Activated CD8-positive, alpha-beta T cell treated with anti-CD3 and anti-CD28 coated beads for 36 hours (primary cell): ENCODE measurements at regions of chr2 and their contacts with region 1.

Region 1: DNA sequence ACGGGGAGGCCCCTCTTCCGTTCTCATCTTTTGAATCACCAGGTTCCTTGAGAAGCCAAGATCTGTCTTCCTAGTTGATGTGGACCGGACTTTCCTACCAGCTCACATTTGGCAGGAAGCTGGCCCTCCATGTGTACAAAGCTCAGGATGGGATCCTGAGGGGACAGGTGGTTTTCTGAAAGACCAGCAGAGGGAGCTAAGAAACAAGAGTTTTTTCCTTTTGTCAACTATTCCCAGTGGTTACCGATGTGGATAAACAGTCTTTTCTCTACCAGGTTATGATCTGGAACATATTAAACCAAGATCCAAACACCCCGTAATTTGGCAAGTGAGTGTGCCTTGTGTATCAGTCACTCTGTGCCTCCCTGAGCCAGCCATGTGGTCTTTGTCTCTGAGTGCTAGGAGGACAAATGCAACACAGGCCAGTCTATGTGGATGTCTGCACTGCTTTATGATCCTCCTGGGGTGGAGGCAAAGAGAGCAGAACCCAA is 25.1 kb upstream of the ARHGAP25 start:
- DNase-seq: peak; percentile 32
- ATAC-seq: peak; percentile 84
- H3K4me3 Mint-ChIP-seq: no peak overlapping the region
- H3K27ac Mint-ChIP-seq: peak overlapping the region; percentile 63
- H3K4me1 Mint-ChIP-seq: peaks cover 26% of the 10 kb centered on the region
- H3K27me3 Mint-ChIP-seq: peaks cover 2% of the 10 kb centered on the region
- CTCF ChIP-seq: peak; percentile 87

Region 2: DNA sequence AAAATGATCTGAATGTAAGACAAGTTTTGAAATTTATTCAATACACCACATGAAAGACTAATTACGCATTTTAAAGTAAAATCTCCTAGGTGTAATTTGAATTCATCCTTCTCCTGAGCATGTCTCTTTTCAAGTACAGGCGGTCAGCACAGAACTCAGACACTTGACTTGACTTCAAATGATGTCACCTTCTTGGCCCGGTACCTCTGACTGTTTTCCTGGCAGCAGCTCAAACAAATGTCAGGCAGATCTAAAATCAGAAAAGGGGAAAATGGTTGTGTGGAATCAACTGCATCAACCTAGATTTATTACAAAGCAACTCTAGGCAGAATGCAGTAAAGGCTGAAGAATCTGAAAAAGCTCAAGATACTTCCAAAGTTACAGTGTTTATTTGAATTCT is 77.4 kb before region 1 on chr2:
- CTCF ChIA-PET with region 1: no interaction called
- POLR2A ChIA-PET with region 1: no interaction called
- intact Hi-C with region 1: no loop called
- DNase-seq: no peak
- ATAC-seq: no peak
- H3K4me3 Mint-ChIP-seq: no peak overlapping the region
- H3K27ac Mint-ChIP-seq: no peak overlapping the region
- H3K4me1 Mint-ChIP-seq: no peaks in the 10 kb centered on the region
- H3K27me3 Mint-ChIP-seq: peaks cover 6% of the 10 kb centered on the region
- CTCF ChIP-seq: no peak

Region 3: GRCh38 chr2:68653538-68653982 is 55.9 kb before region 1 on chr2:
- CTCF ChIA-PET with region 1: interaction called, 15 read pairs
- POLR2A ChIA-PET with region 1: no interaction called
- intact Hi-C with region 1: no loop called
- DNase-seq: peak; percentile 80
- ATAC-seq: peak; percentile 81
- H3K4me3 Mint-ChIP-seq: peak overlapping the region; percentile 42
- H3K27ac Mint-ChIP-seq: peak overlapping the region; percentile 84
- H3K4me1 Mint-ChIP-seq: peaks cover 47% of the 10 kb centered on the region
- H3K27me3 Mint-ChIP-seq: peaks cover 27% of the 10 kb centered on the region
- CTCF ChIP-seq: no peak

Region 4: GRCh38 chr2:68721482-68722101 is 12.1 kb after region 1 on chr2:
- CTCF ChIA-PET with region 1: interaction called, 57 read pairs
- POLR2A ChIA-PET with region 1: interaction called, 3 read pairs
- intact Hi-C with region 1: no loop called
- DNase-seq: peak; percentile 53
- ATAC-seq: peak; percentile 33
- H3K4me3 Mint-ChIP-seq: peak overlapping the region; percentile 50
- H3K27ac Mint-ChIP-seq: peak overlapping the region; percentile 87
- H3K4me1 Mint-ChIP-seq: peaks cover 77% of the 10 kb centered on the region
- H3K27me3 Mint-ChIP-seq: no peaks in the 10 kb centered on the region
- CTCF ChIP-seq: no peak

Region 5: GRCh38 chr2:68742626-68743415 is 33.4 kb after region 1 on chr2:
- CTCF ChIA-PET with region 1: interaction called, 28 read pairs
- POLR2A ChIA-PET with region 1: interaction called, 111 read pairs
- intact Hi-C with region 1: no loop called
- DNase-seq: no peak
- ATAC-seq: no peak
- H3K4me3 Mint-ChIP-seq: peak overlapping the region; percentile 2
- H3K27ac Mint-ChIP-seq: peak overlapping the region; percentile 81
- H3K4me1 Mint-ChIP-seq: peaks cover 89% of the 10 kb centered on the region
- H3K27me3 Mint-ChIP-seq: no peaks in the 10 kb centered on the region
- CTCF ChIP-seq: no peak

Region 6: GRCh38 chr2:68837164-68837860 is 127.8 kb after region 1 on chr2:
- CTCF ChIA-PET with region 1: interaction called, 15 read pairs
- POLR2A ChIA-PET with region 1: no interaction called
- intact Hi-C with region 1: no loop called
- DNase-seq: peak; percentile 85
- ATAC-seq: peak; percentile 55
- H3K4me3 Mint-ChIP-seq: no peak overlapping the region
- H3K27ac Mint-ChIP-seq: peak overlapping the region; percentile 43
- H3K4me1 Mint-ChIP-seq: peaks cover 37% of the 10 kb centered on the region
- H3K27me3 Mint-ChIP-seq: no peaks in the 10 kb centered on the region
- CTCF ChIP-seq: peak; percentile 84